Naive thymus-derived CD4-positive, alpha-beta T cell (primary cell): ENCODE measurements at regions of chr1 and their contacts with region 1.

Region 1: DNA sequence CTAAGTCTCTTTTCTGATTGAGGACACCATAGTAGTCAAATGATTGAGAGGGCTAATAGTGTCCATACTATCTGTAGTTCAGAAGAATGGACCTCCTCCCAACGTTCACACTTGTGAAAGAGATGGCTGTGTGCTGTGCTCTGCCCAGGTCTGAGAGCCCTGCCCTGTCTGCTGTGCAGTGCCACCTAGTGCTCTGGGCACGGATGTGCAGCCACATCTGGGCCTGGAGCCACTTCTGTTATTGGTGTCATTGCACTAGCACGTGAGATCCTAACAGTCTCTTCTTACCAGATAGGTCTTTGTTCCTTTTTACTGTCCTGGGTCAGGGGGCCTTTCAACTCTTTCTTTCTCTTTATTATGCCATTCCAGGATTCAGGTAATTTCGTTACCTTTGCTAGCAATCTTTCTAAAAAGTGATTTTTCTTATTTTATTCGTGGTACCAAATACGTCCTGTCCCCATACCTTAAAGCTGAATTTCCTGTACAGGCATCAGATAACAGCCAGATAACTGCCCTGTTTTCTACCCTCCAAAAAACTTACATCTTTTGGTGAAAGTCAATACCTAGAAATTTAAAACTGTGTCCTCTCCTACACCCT is 21.7 kb downstream of the INTS3 start:
- DNase-seq: peak; percentile 62 to 79 (median 76)
- ATAC-seq: peak; percentile 100
- H3K4me3 ChIP-seq: no peak overlapping the region
- H3K4me3 Mint-ChIP-seq: no peak overlapping the region
- H3K27ac ChIP-seq: no peak overlapping the region
- H3K27ac Mint-ChIP-seq: peak overlapping the region in 4 of 9 donors; percentile 0 to 71 (median 8)
- H3K4me1 ChIP-seq: no peaks in the 10 kb centered on the region
- H3K4me1 Mint-ChIP-seq: peaks cover 0 to 9% (median 4%) of the 10 kb centered on the region in 7 donors
- H3K27me3 ChIP-seq: no peaks in the 10 kb centered on the region
- H3K27me3 Mint-ChIP-seq: no peaks in the 10 kb centered on the region

Region 2: GRCh38 chr1:153677718-153678505 is 71.6 kb before region 1 on chr1:
- CTCF ChIA-PET with region 1: interaction called, 7 read pairs
- POLR2A ChIA-PET with region 1: interaction called, 4 read pairs
- intact Hi-C with region 1: loop called (anchors 1 kb)
- DNase-seq: peak in 8 of 9 donors; percentile 23 to 55 (median 44)
- ATAC-seq: peak; percentile 69
- H3K4me3 ChIP-seq: peak overlapping the region; percentile 34
- H3K4me3 Mint-ChIP-seq: peak overlapping the region; percentile 80 to 92 (median 88)
- H3K27ac ChIP-seq: no peak overlapping the region
- H3K27ac Mint-ChIP-seq: no peak overlapping the region
- H3K4me1 ChIP-seq: peaks cover 8 to 17% of the 10 kb centered on the region in 2 donors
- H3K4me1 Mint-ChIP-seq: peaks cover 18 to 25% (median 23%) of the 10 kb centered on the region in 7 donors
- H3K27me3 ChIP-seq: peaks cover 5 to 7% of the 10 kb centered on the region in 2 donors
- H3K27me3 Mint-ChIP-seq: peaks cover 33 to 56% (median 45%) of the 10 kb centered on the region in 5 donors